GM10248 (cell line): ENCODE measurements at regions of chr12 and their contacts with region 1.

Region 1: DNA sequence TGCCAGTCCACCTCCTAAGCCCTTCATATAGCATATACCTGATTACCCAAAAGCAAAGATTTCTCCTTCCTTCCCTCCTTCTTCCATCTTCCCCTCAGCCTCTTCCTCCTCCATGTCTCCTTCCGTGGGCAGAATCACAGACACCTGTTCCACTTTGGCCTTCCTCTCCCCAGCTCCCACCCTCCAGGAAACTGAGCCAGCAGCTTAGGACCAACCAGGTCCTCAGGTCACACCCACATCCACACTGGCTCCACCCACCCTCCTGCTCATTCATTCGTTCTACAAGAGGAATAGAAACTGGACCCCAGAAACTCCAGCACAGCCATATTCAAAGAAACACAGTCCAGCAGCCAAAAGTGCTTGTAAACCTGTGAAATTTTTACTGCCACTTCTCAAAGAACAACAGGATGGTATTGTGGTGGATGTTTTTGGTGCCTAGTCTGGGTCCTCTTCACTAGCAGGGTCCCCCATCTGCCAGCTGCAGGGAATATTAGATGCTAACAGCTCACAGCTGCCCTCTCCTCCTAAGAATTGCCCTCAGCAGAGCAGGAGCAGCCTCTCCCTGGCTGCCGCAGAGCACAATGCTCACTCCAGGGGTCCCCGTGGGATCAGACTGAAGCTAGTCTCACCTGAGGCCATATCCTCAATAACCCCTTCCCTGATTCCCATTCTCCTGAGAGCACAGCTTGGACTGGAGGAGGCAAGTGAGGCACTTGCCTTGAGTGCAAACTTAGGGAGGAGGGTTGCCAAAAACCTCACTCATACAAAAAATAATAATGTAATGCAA is 18.4 kb downstream of the CMKLR1 start:
- DNase-seq: peak; percentile 63
- CTCF ChIP-seq: no peak

Region 2: GRCh38 chr12:108305520-108305919 is 15.2 kb before region 1 on chr12:
- CTCF ChIA-PET with region 1: interaction called, 15 read pairs
- POLR2A ChIA-PET with region 1: no interaction called
- DNase-seq: no peak
- CTCF ChIP-seq: no peak

Region 3: DNA sequence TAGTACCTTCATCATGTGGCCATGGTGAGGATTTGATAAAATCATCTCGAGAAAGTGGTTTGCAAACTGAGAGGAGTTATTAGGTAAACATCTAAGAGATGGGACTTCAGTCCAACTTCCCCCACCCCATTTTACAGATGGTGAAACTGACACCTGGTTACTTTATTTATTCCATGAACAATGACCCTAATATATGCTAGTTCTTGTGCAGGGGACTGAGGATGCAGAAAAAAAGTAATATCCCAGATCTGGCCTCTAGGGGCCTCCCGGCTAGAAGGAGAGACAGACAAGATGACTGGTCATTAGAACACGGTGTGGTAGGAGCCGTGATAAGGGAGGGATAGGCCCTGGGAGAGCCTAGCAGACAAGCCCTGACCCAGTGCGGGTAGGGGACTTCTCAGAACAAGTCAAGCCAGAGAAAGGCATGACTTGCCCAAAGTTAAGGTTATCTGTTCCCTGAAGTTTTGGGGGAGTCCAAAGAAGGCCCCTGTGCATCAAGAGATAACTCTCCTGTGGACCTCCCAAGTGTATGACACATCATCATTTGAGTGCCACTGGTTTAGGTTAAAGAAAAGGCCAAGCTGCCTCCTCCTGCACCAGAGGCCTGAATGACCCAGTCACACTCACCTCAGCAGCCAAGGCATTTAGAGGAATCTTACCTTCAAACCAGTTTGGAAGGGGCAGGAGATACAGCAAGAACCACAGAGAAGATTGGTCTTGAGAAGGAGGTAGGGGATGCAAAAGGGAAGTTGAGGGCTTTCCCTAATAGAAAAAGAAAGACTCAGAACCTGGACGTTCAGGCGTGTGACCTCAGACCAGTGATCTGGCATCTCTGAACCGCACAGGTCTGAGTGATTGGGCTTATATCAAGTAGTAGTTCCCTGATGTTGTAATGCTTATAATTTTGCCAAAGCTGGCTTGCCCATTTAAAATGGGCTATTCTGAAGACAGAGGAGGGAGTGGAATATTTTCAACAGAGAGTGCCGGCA is 16.8 kb after region 1 on chr12:
- CTCF ChIA-PET with region 1: interaction called, 32 read pairs
- POLR2A ChIA-PET with region 1: no interaction called
- DNase-seq: peak; percentile 61
- CTCF ChIP-seq: peak; percentile 44